ENCODE measurements at regions of chr11 and their contacts with region 1.

Region 1: GRCh38 chr11:120688163-120688562 is 176.6 kb downstream of the GRIK4 start:
- DNase-seq: no peak
- H3K4me3 ChIP-seq: no peak overlapping the region
- H3K27ac ChIP-seq: no peak overlapping the region
- H3K4me1 ChIP-seq: no peaks in the 10 kb centered on the region
- H3K27me3 ChIP-seq: no peaks in the 10 kb centered on the region
- CTCF ChIP-seq: no peak
- EP300 ChIP-seq: no peak
- POLR2A ChIP-seq: no peak
- RAD21 ChIP-seq: no peak

Region 2: GRCh38 chr11:120569861-120570260 is 118.3 kb before region 1 on chr11:
- CTCF ChIA-PET with region 1: no interaction called
- POLR2A ChIA-PET with region 1: no interaction called
- DNase-seq: no peak
- H3K4me3 ChIP-seq: no peak overlapping the region; a peak in 1 of 8 replicates
- H3K27ac ChIP-seq: no peak overlapping the region
- H3K4me1 ChIP-seq: peaks cover 3 to 14% (median 6%) of the 10 kb centered on the region in 4 experiments
- H3K27me3 ChIP-seq: peaks cover 0 to 15% (median 8%) of the 10 kb centered on the region in 4 experiments; a peak in 5 of 7 replicates
- CTCF ChIP-seq: peak in 2 of 3 experiments; percentile 14 to 17; a peak in 2 of 4 replicates
- EP300 ChIP-seq: no peak
- POLR2A ChIP-seq: no peak
- RAD21 ChIP-seq: peak; percentile 9 to 29; a peak in 3 of 4 replicates

Region 3: GRCh38 chr11:120645639-120646038 is 42.5 kb before region 1 on chr11:
- CTCF ChIA-PET with region 1: interaction called, 18 read pairs
- POLR2A ChIA-PET with region 1: interaction called, 3 read pairs
- DNase-seq: peak; percentile 86 to 90
- H3K4me3 ChIP-seq: peak overlapping the region in 2 of 4 experiments; percentile 1 to 24; a peak in 1 of 8 replicates
- H3K27ac ChIP-seq: no peak overlapping the region
- H3K4me1 ChIP-seq: peaks cover 7 to 20% (median 11%) of the 10 kb centered on the region in 4 experiments
- H3K27me3 ChIP-seq: peaks cover 52 to 92% (median 82%) of the 10 kb centered on the region in 4 experiments
- CTCF ChIP-seq: no peak
- EP300 ChIP-seq: peak in 1 of 2 experiments; percentile 94; a peak in 2 of 3 replicates
- POLR2A ChIP-seq: no peak
- RAD21 ChIP-seq: peak in 1 of 2 experiments; percentile 26; a peak in 2 of 4 replicates

Region 4: GRCh38 chr11:120719348-120719747 is 31.2 kb after region 1 on chr11:
- CTCF ChIA-PET with region 1: interaction called, 300 read pairs
- POLR2A ChIA-PET with region 1: no interaction called
- DNase-seq: no peak
- H3K4me3 ChIP-seq: no peak overlapping the region
- H3K27ac ChIP-seq: no peak overlapping the region
- H3K4me1 ChIP-seq: peaks cover 4 to 16% (median 7%) of the 10 kb centered on the region in 4 experiments
- H3K27me3 ChIP-seq: peaks cover 0 to 2% (median 0%) of the 10 kb centered on the region in 4 experiments; a peak in 2 of 7 replicates
- CTCF ChIP-seq: no peak
- EP300 ChIP-seq: no peak
- POLR2A ChIP-seq: no peak
- RAD21 ChIP-seq: no peak